ENCODE measurements at regions of chr3 and their contacts with region 1.

Region 1: GRCh38 chr3:101512646-101513418 is at the start of gene SENP7:
- DNase-seq: peak; percentile 70 to 77
- ATAC-seq: peak; percentile 85 to 88
- H3K4me3 ChIP-seq: peak within 1 kb of the TSS; percentile 66 to 91 (median 85)
- H3K27ac ChIP-seq: peak within 1 kb of the TSS; percentile 86 to 94 (median 90)
- H3K4me1 ChIP-seq: peaks cover 0 to 5% of the 10 kb centered on the region in 2 donors
- H3K27me3 ChIP-seq: peaks cover 0 to 7% (median 0%) of the 10 kb centered on the region in 3 donors
- CTCF ChIP-seq: no peak
- POLR2A ChIP-seq: no peak
- total RNA-seq, gene SENP7: 5.3 to 16.8 (median 5.9) TPM

Region 2: GRCh38 chr3:100708967-100709841 is 803.6 kb before region 1 on chr3 and contains the start of gene TFG:
- in situ Hi-C with region 1: no loop called
- intact Hi-C with region 1: loop called (anchors 5 kb)
- DNase-seq: peak; percentile 95 to 98
- ATAC-seq: peak; percentile 95 to 98
- H3K4me3 ChIP-seq: peak within 1 kb of the TSS; percentile 73 to 97 (median 86)
- H3K27ac ChIP-seq: peak within 1 kb of the TSS; percentile 92 to 99 (median 96)
- H3K4me1 ChIP-seq: peaks cover 18 to 24% of the 10 kb centered on the region in 2 donors
- H3K27me3 ChIP-seq: no peaks in the 10 kb centered on the region
- CTCF ChIP-seq: no peak
- POLR2A ChIP-seq: peak; percentile 81 to 84
- total RNA-seq, gene TFG: 57.2 to 77.9 (median 67.3) TPM

Region 3: DNA sequence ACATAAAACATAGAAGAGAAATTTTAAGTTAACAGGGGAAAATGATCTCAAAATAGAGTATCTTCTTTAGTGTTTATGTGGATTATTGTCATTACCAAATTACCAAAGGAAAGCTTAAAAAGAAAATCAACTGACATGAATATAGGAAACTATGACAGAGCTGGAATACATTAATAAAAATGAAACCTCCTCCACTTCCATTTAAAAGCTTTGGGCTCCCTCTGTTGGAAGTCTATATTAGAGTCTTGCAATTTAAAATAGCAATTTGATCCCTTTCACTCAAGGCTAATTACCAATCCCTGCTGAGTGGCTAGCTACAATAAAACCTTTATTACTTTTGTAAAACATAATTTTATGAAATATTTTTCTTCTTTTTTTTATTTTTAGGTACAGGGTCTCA is 131.0 kb before region 1 on chr3:
- in situ Hi-C with region 1: no loop called
- intact Hi-C with region 1: loop called (anchors 10 kb)
- DNase-seq: no peak
- ATAC-seq: peak; percentile 68 to 71
- H3K4me3 ChIP-seq: no peak overlapping the region
- H3K27ac ChIP-seq: no peak overlapping the region
- H3K4me1 ChIP-seq: peaks cover 20 to 37% of the 10 kb centered on the region in 2 donors
- H3K27me3 ChIP-seq: no peaks in the 10 kb centered on the region
- CTCF ChIP-seq: peak in 4 of 5 experiments; percentile 20 to 52 (median 42)
- POLR2A ChIP-seq: no peak

Region 4: GRCh38 chr3:101561630-101562328 is 48.9 kb after region 1 on chr3 and contains the start of gene TRMT10C:
- in situ Hi-C with region 1: no loop called
- intact Hi-C with region 1: loop called (anchors 2 kb)
- DNase-seq: peak; percentile 82 to 90
- ATAC-seq: peak; percentile 99 to 100
- H3K4me3 ChIP-seq: peak within 1 kb of the TSS; percentile 85 to 99 (median 94)
- H3K27ac ChIP-seq: peak within 1 kb of the TSS; percentile 87 to 93 (median 92)
- H3K4me1 ChIP-seq: peaks cover 13 to 16% of the 10 kb centered on the region in 2 donors
- H3K27me3 ChIP-seq: peaks cover 0 to 21% (median 11%) of the 10 kb centered on the region in 3 donors
- CTCF ChIP-seq: no peak
- POLR2A ChIP-seq: peak; percentile 73 to 83
- total RNA-seq, gene TRMT10C: 17.9 to 33.2 (median 26.2) TPM

Region 5: GRCh38 chr3:101676765-101677435 is 164.1 kb after region 1 on chr3 and contains the start of gene ZBTB11:
- in situ Hi-C with region 1: no loop called
- intact Hi-C with region 1: loop called (anchors 5 kb)
- DNase-seq: peak; percentile 99
- ATAC-seq: peak; percentile 96 to 98
- H3K4me3 ChIP-seq: peak within 1 kb of the TSS; percentile 86 to 100 (median 99)
- H3K27ac ChIP-seq: peak within 1 kb of the TSS; percentile 95 to 99 (median 98)
- H3K4me1 ChIP-seq: peaks cover 17 to 23% of the 10 kb centered on the region in 2 donors
- H3K27me3 ChIP-seq: no peaks in the 10 kb centered on the region
- CTCF ChIP-seq: peak in 2 of 5 experiments; percentile 32 to 35
- POLR2A ChIP-seq: peak; percentile 88 to 92
- total RNA-seq, gene ZBTB11: 14.6 to 20.9 (median 16.1) TPM